Esophagus muscularis mucosa (tissue), 4 donors: ENCODE measurements at regions of chr7 and their contacts with region 1.

Region 1: GRCh38 chr7:127585044-127585953 is at the start of gene GCC1:
- DNase-seq: peak; percentile 98
- H3K4me3 ChIP-seq: peak within 1 kb of the TSS; percentile 60 to 97 (median 84)
- H3K27ac ChIP-seq: peak within 1 kb of the TSS; percentile 86 to 97 (median 87)
- H3K4me1 ChIP-seq: peaks cover 54 to 81% (median 73%) of the 10 kb centered on the region in 4 donors
- H3K27me3 ChIP-seq: no peaks in the 10 kb centered on the region
- CTCF ChIP-seq: no peak
- EP300 ChIP-seq: no peak
- POLR2A ChIP-seq: peak; percentile 70
- total RNA-seq, gene GCC1: 11.6 to 17.3 (median 14.7) TPM

Region 2: GRCh38 chr7:127392566-127393367 is 192.5 kb before region 1 on chr7 and contains the start of gene ZNF800:
- intact Hi-C with region 1: loop called (anchors 2 kb)
- DNase-seq: peak; percentile 96
- H3K4me3 ChIP-seq: peak within 1 kb of the TSS; percentile 88 to 97 (median 94)
- H3K27ac ChIP-seq: peak within 1 kb of the TSS; percentile 93 to 98 (median 97)
- H3K4me1 ChIP-seq: peaks cover 17 to 45% (median 31%) of the 10 kb centered on the region in 4 donors
- H3K27me3 ChIP-seq: no peaks in the 10 kb centered on the region
- CTCF ChIP-seq: no peak
- EP300 ChIP-seq: no peak
- POLR2A ChIP-seq: peak; percentile 59
- total RNA-seq, gene ZNF800: 24.7 to 35.6 (median 27.9) TPM

Region 3: GRCh38 chr7:127478024-127478355 is 107.3 kb before region 1 on chr7:
- intact Hi-C with region 1: no loop called
- DNase-seq: no peak
- H3K4me3 ChIP-seq: no peak overlapping the region
- H3K27ac ChIP-seq: no peak overlapping the region
- H3K4me1 ChIP-seq: no peaks in the 10 kb centered on the region
- H3K27me3 ChIP-seq: peaks cover 0 to 4% (median 0%) of the 10 kb centered on the region in 4 donors
- CTCF ChIP-seq: no peak
- EP300 ChIP-seq: no peak
- POLR2A ChIP-seq: no peak

Region 4: DNA sequence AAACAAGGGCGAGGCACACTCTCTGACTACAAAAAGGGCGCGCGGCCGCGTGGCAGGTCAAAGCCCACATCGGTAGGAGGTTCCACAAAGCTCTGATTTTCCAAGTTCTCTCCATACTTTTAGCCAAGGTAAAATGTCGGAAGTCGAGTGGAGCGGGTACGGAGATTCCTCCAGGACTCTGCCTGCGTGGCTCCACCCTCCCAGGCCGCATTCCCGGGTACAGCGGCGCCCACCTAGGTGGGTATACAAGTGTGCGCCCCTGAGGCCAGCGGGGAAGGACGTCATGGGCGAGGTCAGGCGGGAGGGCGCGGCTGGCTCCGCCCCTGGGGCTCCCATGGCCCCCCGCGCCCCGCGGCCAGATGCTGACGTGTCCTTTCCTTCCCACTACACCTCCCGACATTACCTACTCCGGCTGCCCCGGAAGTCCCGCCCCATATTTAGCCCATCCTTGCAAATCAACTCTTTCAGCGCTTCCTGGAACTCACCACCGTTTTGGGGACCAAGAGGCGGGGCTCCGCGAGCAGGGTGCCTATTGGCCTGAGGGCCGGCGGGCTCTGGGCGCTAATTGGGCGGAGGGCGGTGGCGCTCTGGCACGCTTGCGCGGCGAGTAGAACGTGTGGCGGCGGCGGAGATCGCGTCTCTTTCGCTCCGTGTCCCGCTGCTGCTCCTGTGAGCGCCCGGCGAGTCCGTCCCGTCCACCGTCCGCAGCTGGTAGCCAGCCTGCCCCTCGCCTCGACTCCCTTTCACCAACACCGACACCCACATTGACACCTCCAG is 66.4 kb after region 1 on chr7 and contains the start of gene SND1:
- intact Hi-C with region 1: loop called (anchors 2 kb)
- DNase-seq: peak; percentile 100
- H3K4me3 ChIP-seq: peak within 1 kb of the TSS; percentile 80 to 97 (median 91)
- H3K27ac ChIP-seq: peak within 1 kb of the TSS; percentile 85 to 93 (median 90)
- H3K4me1 ChIP-seq: peaks cover 24 to 44% (median 37%) of the 10 kb centered on the region in 4 donors
- H3K27me3 ChIP-seq: no peaks in the 10 kb centered on the region
- CTCF ChIP-seq: peak in 1 of 3 experiments; percentile 20
- EP300 ChIP-seq: peak; percentile 8
- POLR2A ChIP-seq: peak; percentile 55
- total RNA-seq, gene SND1: 71.4 to 91.2 (median 81.3) TPM